ENCODE measurements at regions of chr9 and their contacts with region 1.

Region 1: GRCh38 chr9:99221621-99222415 is at the starts of genes ALG2 and SEC61B:
- DNase-seq: peak; percentile 95
- H3K4me3 ChIP-seq: peak within 1 kb of the TSS; percentile 72
- H3K27ac ChIP-seq: peak within 1 kb of the TSS; percentile 93
- H3K4me1 ChIP-seq: peaks cover 24% of the 10 kb centered on the region
- H3K27me3 ChIP-seq: no peaks in the 10 kb centered on the region
- CTCF ChIP-seq: no peak
- total RNA-seq, gene ALG2: 27.6 and 30.1 TPM in 2 replicates
- total RNA-seq, gene SEC61B: 175 and 183 TPM in 2 replicates

Region 2: GRCh38 chr9:99162759-99163364 is 59.0 kb before region 1 on chr9:
- CTCF ChIA-PET with region 1: no interaction called
- POLR2A ChIA-PET with region 1: no interaction called
- intact Hi-C with region 1: loop called (anchors 10 kb)
- DNase-seq: peak; percentile 53
- H3K4me3 ChIP-seq: no peak overlapping the region
- H3K27ac ChIP-seq: no peak overlapping the region
- H3K4me1 ChIP-seq: peaks cover 6% of the 10 kb centered on the region
- H3K27me3 ChIP-seq: peaks cover under 1% of the 10 kb centered on the region
- CTCF ChIP-seq: peak; percentile 78